ENCODE measurements at regions of chr9 and their contacts with region 1.

Region 1: DNA sequence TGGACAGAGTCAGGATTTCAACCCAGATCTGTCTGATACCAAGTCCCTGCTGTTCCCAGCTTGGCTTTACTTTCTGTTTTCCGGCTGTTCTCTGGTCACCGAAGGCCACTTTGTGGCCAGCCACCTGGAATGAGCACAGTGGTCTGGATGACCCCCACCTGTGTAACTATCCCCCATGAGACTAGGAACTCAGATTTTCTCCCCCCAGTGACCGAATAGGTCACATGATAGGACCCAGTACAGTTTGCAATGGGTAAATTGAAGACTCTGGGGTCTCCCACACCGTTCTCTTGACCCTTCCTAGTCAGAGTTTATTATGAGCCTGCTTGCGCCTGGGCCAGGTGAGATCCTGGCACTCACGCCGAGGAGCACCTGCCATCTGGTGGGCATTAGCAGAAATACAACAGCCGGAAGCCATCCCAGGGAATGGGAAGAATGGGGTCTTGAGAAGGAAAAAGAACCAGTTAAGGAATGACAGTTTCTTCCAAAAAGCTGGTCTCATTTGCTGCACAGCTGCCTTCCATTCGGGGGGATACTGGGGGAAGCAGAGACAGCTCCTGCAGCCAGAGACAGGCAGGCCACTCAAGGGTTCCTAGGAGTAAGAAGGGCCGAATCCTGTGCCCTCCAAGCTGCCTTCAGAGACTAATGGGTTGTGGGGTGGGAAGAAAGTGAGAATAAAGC is 7.1 kb downstream of the PHYHD1 start:
- DNase-seq: peak in 2 of 3 donors; percentile 14 to 38
- H3K4me3 ChIP-seq: no peak overlapping the region
- H3K27ac ChIP-seq: no peak overlapping the region
- H3K4me1 ChIP-seq: peaks cover 0 to 4% (median 0%) of the 10 kb centered on the region in 4 experiments
- H3K27me3 ChIP-seq: no peaks in the 10 kb centered on the region

Region 2: GRCh38 chr9:128845155-128845931 is 82.5 kb before region 1 on chr9:
- CTCF ChIA-PET with region 1: interaction called, 11 read pairs
- POLR2A ChIA-PET with region 1: no interaction called
- DNase-seq: no peak
- H3K4me3 ChIP-seq: no peak overlapping the region
- H3K27ac ChIP-seq: no peak overlapping the region
- H3K4me1 ChIP-seq: no peaks in the 10 kb centered on the region
- H3K27me3 ChIP-seq: no peaks in the 10 kb centered on the region

Region 3: DNA sequence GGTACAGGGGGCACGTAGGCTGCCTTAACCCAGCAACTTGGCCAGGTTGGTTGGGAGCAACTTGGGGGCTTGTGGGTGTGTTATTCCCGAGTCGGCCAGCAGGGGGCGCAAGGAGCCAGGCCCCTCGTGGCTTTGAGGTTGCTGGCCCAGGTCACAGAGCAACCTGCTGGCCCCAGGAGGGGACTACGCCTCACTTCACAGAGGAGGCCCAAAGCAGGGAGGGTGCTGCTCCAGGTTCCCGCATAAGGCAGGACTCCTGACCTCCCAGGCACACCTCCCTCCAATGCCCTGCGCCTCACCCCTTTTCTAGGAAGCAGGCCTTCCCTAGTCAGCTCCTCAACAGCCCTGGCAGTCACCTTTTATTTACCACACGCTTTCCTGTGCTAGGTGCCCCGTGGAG is 64.2 kb before region 1 on chr9:
- CTCF ChIA-PET with region 1: interaction called, 107 read pairs
- POLR2A ChIA-PET with region 1: no interaction called
- DNase-seq: peak; percentile 83 to 91 (median 89)
- H3K4me3 ChIP-seq: no peak overlapping the region
- H3K27ac ChIP-seq: no peak overlapping the region
- H3K4me1 ChIP-seq: peaks cover 0 to 3% (median 1%) of the 10 kb centered on the region in 4 experiments
- H3K27me3 ChIP-seq: no peaks in the 10 kb centered on the region

Region 4: GRCh38 chr9:128881901-128882681 is 45.8 kb before region 1 on chr9 and contains the starts of genes KYAT1 and LRRC8A:
- CTCF ChIA-PET with region 1: interaction called, 90 read pairs
- POLR2A ChIA-PET with region 1: no interaction called
- DNase-seq: peak; percentile 96 to 98 (median 98)
- H3K4me3 ChIP-seq: peak within 1 kb of the TSS; percentile 86 to 99 (median 94)
- H3K27ac ChIP-seq: peak within 1 kb of the TSS; percentile 77 to 94
- H3K4me1 ChIP-seq: peaks cover 0 to 31% (median 21%) of the 10 kb centered on the region in 4 experiments
- H3K27me3 ChIP-seq: no peaks in the 10 kb centered on the region

Measured in common myeloid progenitor, CD34-positive (primary cell).